Dendritic cell treated with granulocyte-macrophage colony-stimulating factor and Interleukin-4, amounts not matched to agents 40 ng/mL and 50 ng/mL, for 4 days (primary cell): ENCODE measurements at regions of chr12 and their contacts with region 1.

Region 1: GRCh38 chr12:22625762-22626294 is 857 bp downstream of the ETNK1 start:
- H3K4me3 Mint-ChIP-seq: peak overlapping the region; percentile 98
- H3K27ac Mint-ChIP-seq: peak overlapping the region; percentile 100
- H3K4me1 Mint-ChIP-seq: peaks cover 15% of the 10 kb centered on the region
- H3K27me3 Mint-ChIP-seq: no peaks in the 10 kb centered on the region

Region 2: DNA sequence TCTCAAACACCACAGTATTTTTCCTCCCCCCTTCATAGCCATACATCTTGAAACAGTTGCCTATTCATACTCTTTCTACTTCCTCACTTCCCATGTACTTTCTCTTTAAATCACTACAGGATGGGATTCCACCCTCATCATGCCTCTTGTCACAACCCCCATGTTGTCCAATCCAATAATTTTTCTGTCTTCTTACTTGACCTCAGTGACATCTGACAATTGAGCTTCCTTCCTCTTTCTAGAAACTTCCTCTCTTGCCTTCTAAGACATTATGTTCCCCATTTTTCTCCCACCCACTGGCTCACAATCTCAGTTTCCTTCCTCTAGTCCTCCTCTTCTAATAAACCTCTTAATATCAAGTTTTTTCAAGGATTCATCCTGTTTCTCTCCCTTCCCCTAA is 86.8 kb before region 1 on chr12:
- intact Hi-C with region 1: loop called (anchors 1 kb)
- H3K4me3 Mint-ChIP-seq: peak overlapping the region; percentile 8
- H3K27ac Mint-ChIP-seq: peak overlapping the region; percentile 71
- H3K4me1 Mint-ChIP-seq: peaks cover 58% of the 10 kb centered on the region
- H3K27me3 Mint-ChIP-seq: no peaks in the 10 kb centered on the region

Region 3: GRCh38 chr12:22544038-22544979 is 81.5 kb before region 1 on chr12 and contains the start of gene C2CD5:
- intact Hi-C with region 1: loop called (anchors 1 kb)
- H3K4me3 Mint-ChIP-seq: peak within 1 kb of the TSS; percentile 81
- H3K27ac Mint-ChIP-seq: peak within 1 kb of the TSS; percentile 97
- H3K4me1 Mint-ChIP-seq: peaks cover 59% of the 10 kb centered on the region
- H3K27me3 Mint-ChIP-seq: no peaks in the 10 kb centered on the region